Body of pancreas (tissue), 4 donors: ENCODE measurements at regions of chr2 and their contacts with region 1.

Region 1: GRCh38 chr2:229133155-229133772 is 137.8 kb downstream of the PID1 start:
- DNase-seq: peak in 3 of 4 donors; percentile 26 to 58 (median 26)
- ATAC-seq: peak; percentile 80
- H3K4me3 ChIP-seq: no peak overlapping the region
- H3K27ac ChIP-seq: no peak overlapping the region
- H3K4me1 ChIP-seq: peaks cover 5% of the 10 kb centered on the region
- H3K27me3 ChIP-seq: no peaks in the 10 kb centered on the region
- CTCF ChIP-seq: peak; percentile 33 to 89 (median 75)
- POLR2A ChIP-seq: no peak

Region 2: DNA sequence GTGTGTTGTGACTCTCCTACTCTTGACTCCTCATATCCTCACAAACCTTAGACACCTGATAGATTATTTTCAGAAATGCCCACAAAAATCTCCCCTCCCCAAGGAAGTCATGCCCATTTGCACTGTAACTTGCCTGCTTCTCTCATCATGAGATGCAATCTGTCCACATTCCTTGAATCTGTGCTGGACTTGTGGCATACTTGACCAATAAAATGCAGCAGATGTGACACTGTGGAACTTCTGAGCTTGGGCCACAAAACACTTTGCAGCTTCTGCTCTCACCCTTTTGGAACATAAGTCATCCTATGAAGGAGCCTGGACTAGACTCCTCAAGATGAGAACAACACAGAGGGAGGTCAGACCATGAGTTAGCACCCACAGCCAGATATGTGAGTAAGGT is 142.2 kb after region 1 on chr2:
- intact Hi-C with region 1: loop called (anchors 5 kb)
- DNase-seq: no peak
- ATAC-seq: no peak
- H3K4me3 ChIP-seq: no peak overlapping the region
- H3K27ac ChIP-seq: no peak overlapping the region
- H3K4me1 ChIP-seq: peaks cover 13% of the 10 kb centered on the region
- H3K27me3 ChIP-seq: no peaks in the 10 kb centered on the region
- CTCF ChIP-seq: no peak
- POLR2A ChIP-seq: no peak

Region 3: DNA sequence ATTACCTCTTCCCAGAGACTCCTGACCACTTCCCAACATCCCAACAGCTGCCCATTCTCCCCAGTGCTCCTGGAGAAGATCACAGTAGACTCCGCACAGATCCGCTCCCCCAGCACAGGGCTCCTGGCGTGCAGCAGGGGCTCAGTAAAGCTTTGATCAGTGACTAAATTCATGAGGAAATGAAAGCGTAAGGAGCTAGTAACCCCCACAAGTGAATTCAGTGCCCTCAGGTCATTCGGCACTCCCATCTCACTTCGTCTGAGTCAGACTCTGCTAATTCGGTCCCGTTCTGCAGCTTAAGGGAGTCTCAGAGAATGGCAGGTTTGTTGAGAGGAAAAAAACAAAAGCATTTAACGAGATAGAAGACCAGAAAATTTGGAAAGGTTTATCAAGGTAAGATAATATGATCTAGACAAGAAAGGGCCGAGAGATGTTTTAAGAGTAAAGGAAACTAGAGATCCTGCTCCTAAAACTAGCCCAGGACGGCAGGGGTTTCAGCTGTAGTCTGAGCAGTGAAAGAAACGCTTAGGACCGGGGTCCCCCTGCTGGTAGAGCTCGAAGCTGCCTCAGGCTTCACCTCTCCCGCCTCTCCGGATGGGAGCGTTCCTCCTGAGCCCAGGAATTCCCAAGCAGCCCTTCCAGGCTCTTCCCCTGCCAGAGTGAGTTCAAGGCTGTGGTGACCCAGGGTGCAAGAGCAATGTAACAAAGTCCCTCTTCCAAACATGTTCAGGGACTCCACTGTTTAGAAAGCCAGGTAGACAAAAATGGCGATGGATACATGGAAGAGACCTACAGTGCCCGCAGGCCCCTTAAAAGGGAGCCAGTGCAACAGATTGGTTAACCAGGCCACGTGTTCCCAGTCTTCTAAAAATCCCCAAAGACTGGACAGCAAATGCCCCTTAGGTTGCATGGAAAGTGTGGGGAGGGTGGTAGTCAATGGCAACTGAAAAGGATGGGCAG is 453.8 kb after region 1 on chr2:
- intact Hi-C with region 1: loop called (anchors 10 kb)
- DNase-seq: peak; percentile 73 to 83 (median 78)
- ATAC-seq: peak; percentile 94
- H3K4me3 ChIP-seq: no peak overlapping the region
- H3K27ac ChIP-seq: no peak overlapping the region
- H3K4me1 ChIP-seq: no peaks in the 10 kb centered on the region
- H3K27me3 ChIP-seq: no peaks in the 10 kb centered on the region
- CTCF ChIP-seq: peak; percentile 54 to 79 (median 75)
- POLR2A ChIP-seq: no peak